ENCODE measurements at regions of chr3 and their contacts with region 1.

Region 1: GRCh38 chr3:88219138-88219792 is 69.5 kb downstream of the C3orf38 start:
- DNase-seq: peak in 3 of 9 donors; percentile 3 to 23 (median 7)
- ATAC-seq: peak; percentile 51
- H3K4me3 ChIP-seq: no peak overlapping the region
- H3K4me3 Mint-ChIP-seq: peak overlapping the region in 1 of 10 donors; percentile 1
- H3K27ac ChIP-seq: no peak overlapping the region
- H3K27ac Mint-ChIP-seq: no peak overlapping the region
- H3K4me1 ChIP-seq: no peaks in the 10 kb centered on the region
- H3K4me1 Mint-ChIP-seq: peaks cover 0 to 3% (median 0%) of the 10 kb centered on the region in 7 donors
- H3K27me3 ChIP-seq: no peaks in the 10 kb centered on the region
- H3K27me3 Mint-ChIP-seq: peaks cover 0 to 5% (median 0%) of the 10 kb centered on the region in 5 donors

Region 2: GRCh38 chr3:87848003-87848402 is 371.3 kb before region 1 on chr3:
- CTCF ChIA-PET with region 1: no interaction called
- POLR2A ChIA-PET with region 1: no interaction called
- intact Hi-C with region 1: no loop called
- DNase-seq: no peak
- ATAC-seq: no peak
- H3K4me3 ChIP-seq: no peak overlapping the region
- H3K4me3 Mint-ChIP-seq: no peak overlapping the region
- H3K27ac ChIP-seq: no peak overlapping the region
- H3K27ac Mint-ChIP-seq: no peak overlapping the region
- H3K4me1 ChIP-seq: no peaks in the 10 kb centered on the region
- H3K4me1 Mint-ChIP-seq: no peaks in the 10 kb centered on the region
- H3K27me3 ChIP-seq: no peaks in the 10 kb centered on the region
- H3K27me3 Mint-ChIP-seq: no peaks in the 10 kb centered on the region

Region 3: GRCh38 chr3:88203642-88204055 is 15.6 kb before region 1 on chr3:
- CTCF ChIA-PET with region 1: no interaction called
- POLR2A ChIA-PET with region 1: no interaction called
- intact Hi-C with region 1: no loop called
- DNase-seq: peak in 8 of 9 donors; percentile 14 to 43 (median 30)
- ATAC-seq: peak; percentile 80
- H3K4me3 ChIP-seq: no peak overlapping the region
- H3K4me3 Mint-ChIP-seq: no peak overlapping the region
- H3K27ac ChIP-seq: no peak overlapping the region
- H3K27ac Mint-ChIP-seq: no peak overlapping the region
- H3K4me1 ChIP-seq: no peaks in the 10 kb centered on the region
- H3K4me1 Mint-ChIP-seq: peaks cover 0 to 3% (median 0%) of the 10 kb centered on the region in 7 donors
- H3K27me3 ChIP-seq: no peaks in the 10 kb centered on the region
- H3K27me3 Mint-ChIP-seq: peaks cover 0 to 12% (median 0%) of the 10 kb centered on the region in 5 donors

Region 4: GRCh38 chr3:88231207-88231606 is 11.9 kb after region 1 on chr3:
- CTCF ChIA-PET with region 1: no interaction called
- POLR2A ChIA-PET with region 1: no interaction called
- intact Hi-C with region 1: no loop called
- DNase-seq: no peak
- ATAC-seq: no peak
- H3K4me3 ChIP-seq: no peak overlapping the region
- H3K4me3 Mint-ChIP-seq: no peak overlapping the region
- H3K27ac ChIP-seq: no peak overlapping the region
- H3K27ac Mint-ChIP-seq: no peak overlapping the region
- H3K4me1 ChIP-seq: no peaks in the 10 kb centered on the region
- H3K4me1 Mint-ChIP-seq: no peaks in the 10 kb centered on the region
- H3K27me3 ChIP-seq: no peaks in the 10 kb centered on the region
- H3K27me3 Mint-ChIP-seq: peaks cover 0 to 11% (median 3%) of the 10 kb centered on the region in 5 donors

Region 5: DNA sequence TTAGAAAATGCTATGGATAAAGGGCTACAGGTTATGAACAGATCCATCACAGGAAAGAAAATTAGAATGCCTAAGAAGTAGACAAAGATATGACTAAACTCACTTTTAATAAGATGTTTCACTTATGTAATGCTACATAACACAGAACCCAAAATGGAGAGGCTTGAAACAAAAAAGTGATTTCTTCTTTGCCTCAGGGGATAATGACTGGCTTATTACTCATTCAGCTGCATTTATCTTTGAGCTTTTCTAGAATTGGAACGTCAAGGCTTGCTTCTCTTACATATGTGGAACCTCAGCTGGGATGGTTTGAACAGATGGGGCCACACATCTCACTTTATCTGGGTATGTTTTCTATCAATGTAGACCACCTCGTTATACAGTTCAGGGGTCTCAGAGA is 767.6 kb after region 1 on chr3:
- CTCF ChIA-PET with region 1: no interaction called
- POLR2A ChIA-PET with region 1: no interaction called
- intact Hi-C with region 1: no loop called
- DNase-seq: no peak
- ATAC-seq: no peak
- H3K4me3 ChIP-seq: no peak overlapping the region
- H3K4me3 Mint-ChIP-seq: no peak overlapping the region
- H3K27ac ChIP-seq: no peak overlapping the region
- H3K27ac Mint-ChIP-seq: no peak overlapping the region
- H3K4me1 ChIP-seq: no peaks in the 10 kb centered on the region
- H3K4me1 Mint-ChIP-seq: no peaks in the 10 kb centered on the region
- H3K27me3 ChIP-seq: no peaks in the 10 kb centered on the region
- H3K27me3 Mint-ChIP-seq: peaks cover 0 to 4% (median 0%) of the 10 kb centered on the region in 5 donors

Region 6: GRCh38 chr3:89098964-89099585 is 879.8 kb after region 1 on chr3:
- CTCF ChIA-PET with region 1: no interaction called
- POLR2A ChIA-PET with region 1: no interaction called
- intact Hi-C with region 1: loop called (anchors 1 to 5 kb)
- DNase-seq: peak in 6 of 9 donors; percentile 17 to 40 (median 30)
- ATAC-seq: peak; percentile 84
- H3K4me3 ChIP-seq: no peak overlapping the region
- H3K4me3 Mint-ChIP-seq: no peak overlapping the region
- H3K27ac ChIP-seq: no peak overlapping the region
- H3K27ac Mint-ChIP-seq: no peak overlapping the region
- H3K4me1 ChIP-seq: no peaks in the 10 kb centered on the region
- H3K4me1 Mint-ChIP-seq: peaks cover 0 to 2% (median 0%) of the 10 kb centered on the region in 7 donors
- H3K27me3 ChIP-seq: no peaks in the 10 kb centered on the region
- H3K27me3 Mint-ChIP-seq: peaks cover 0 to 5% (median 0%) of the 10 kb centered on the region in 5 donors

Region 7: DNA sequence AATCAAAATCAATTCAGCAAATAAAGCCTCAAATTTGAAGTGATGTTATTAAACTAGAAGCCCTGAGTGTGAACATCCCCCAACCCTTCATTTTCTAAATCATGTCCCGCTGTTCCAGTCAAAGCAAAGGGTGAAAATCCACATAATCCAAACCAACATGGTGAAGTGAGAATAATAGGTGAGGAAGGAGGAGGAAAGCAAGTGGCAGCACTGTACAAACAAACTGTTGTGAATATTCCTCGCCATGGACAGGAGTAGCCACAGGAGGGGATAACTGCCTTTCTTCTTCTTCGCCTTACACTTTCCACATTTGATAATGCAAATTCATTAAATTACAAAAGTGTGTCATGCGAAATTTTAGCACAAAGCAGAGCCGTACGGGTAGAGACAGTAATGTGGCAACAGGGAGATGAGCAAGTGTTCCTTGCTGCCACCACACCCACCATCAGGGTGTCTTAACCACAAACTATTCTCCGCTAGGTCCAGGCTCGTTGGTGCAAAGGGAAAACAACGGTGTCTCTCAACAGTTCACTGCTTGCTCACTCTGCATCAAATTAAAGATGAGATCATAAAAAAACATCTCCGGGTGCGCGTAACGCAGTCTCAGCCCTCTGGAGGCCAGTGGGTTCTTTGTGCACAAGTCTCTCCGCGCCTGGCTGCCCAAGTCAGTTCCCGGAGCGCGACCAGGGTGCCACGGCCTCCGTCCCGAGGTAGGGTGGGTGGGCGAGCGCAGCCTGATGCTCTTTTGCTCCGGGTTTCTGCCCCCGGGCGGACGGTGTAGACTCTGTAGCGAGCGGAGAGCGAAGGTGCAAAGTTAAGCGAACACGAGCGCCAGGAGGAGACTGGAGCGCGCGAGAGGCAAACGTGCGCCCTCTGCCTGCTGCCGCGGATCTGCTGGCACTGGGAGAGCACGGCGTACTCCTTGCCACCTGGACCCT is 894.9 kb after region 1 on chr3:
- CTCF ChIA-PET with region 1: no interaction called
- POLR2A ChIA-PET with region 1: no interaction called
- intact Hi-C with region 1: loop called in 1 of 2 experiments (anchors 1 kb)
- DNase-seq: peak in 6 of 9 donors; percentile 6 to 31 (median 11)
- ATAC-seq: peak; percentile 64
- H3K4me3 ChIP-seq: no peak overlapping the region
- H3K4me3 Mint-ChIP-seq: peak overlapping the region in 8 of 10 donors; percentile 23 to 74 (median 54)
- H3K27ac ChIP-seq: no peak overlapping the region
- H3K27ac Mint-ChIP-seq: no peak overlapping the region
- H3K4me1 ChIP-seq: no peaks in the 10 kb centered on the region
- H3K4me1 Mint-ChIP-seq: peaks cover 0 to 7% (median 5%) of the 10 kb centered on the region in 7 donors
- H3K27me3 ChIP-seq: peaks cover 0 to 5% of the 10 kb centered on the region in 2 donors
- H3K27me3 Mint-ChIP-seq: peaks cover 15 to 25% (median 18%) of the 10 kb centered on the region in 5 donors

Measured in naive thymus-derived CD4-positive, alpha-beta T cell (primary cell).